ENCODE measurements at regions of chr1 and their contacts with region 1.

Region 1: GRCh38 chr1:198340139-198340538 is 183.3 kb downstream of the NEK7 start:
- DNase-seq: no peak
- ATAC-seq: no peak
- H3K4me3 ChIP-seq: no peak overlapping the region
- H3K4me3 Mint-ChIP-seq: no peak overlapping the region
- H3K27ac ChIP-seq: no peak overlapping the region
- H3K27ac Mint-ChIP-seq: no peak overlapping the region
- H3K4me1 ChIP-seq: no peaks in the 10 kb centered on the region
- H3K4me1 Mint-ChIP-seq: no peaks in the 10 kb centered on the region
- H3K27me3 ChIP-seq: no peaks in the 10 kb centered on the region
- H3K27me3 Mint-ChIP-seq: no peaks in the 10 kb centered on the region
- CTCF ChIP-seq: no peak

Region 2: GRCh38 chr1:198283222-198283621 is 56.9 kb before region 1 on chr1:
- CTCF ChIA-PET with region 1: no interaction called
- POLR2A ChIA-PET with region 1: no interaction called
- intact Hi-C with region 1: no loop called
- DNase-seq: no peak
- ATAC-seq: no peak
- H3K4me3 ChIP-seq: no peak overlapping the region
- H3K4me3 Mint-ChIP-seq: no peak overlapping the region
- H3K27ac ChIP-seq: no peak overlapping the region
- H3K27ac Mint-ChIP-seq: no peak overlapping the region
- H3K4me1 ChIP-seq: no peaks in the 10 kb centered on the region
- H3K4me1 Mint-ChIP-seq: peaks cover 12% of the 10 kb centered on the region
- H3K27me3 ChIP-seq: no peaks in the 10 kb centered on the region
- H3K27me3 Mint-ChIP-seq: no peaks in the 10 kb centered on the region
- CTCF ChIP-seq: no peak

Region 3: GRCh38 chr1:198435056-198435455 is 94.9 kb after region 1 on chr1:
- CTCF ChIA-PET with region 1: no interaction called
- POLR2A ChIA-PET with region 1: no interaction called
- intact Hi-C with region 1: loop called in 1 of 2 experiments (anchors 1 kb)
- DNase-seq: no peak
- ATAC-seq: no peak
- H3K4me3 ChIP-seq: no peak overlapping the region
- H3K4me3 Mint-ChIP-seq: no peak overlapping the region
- H3K27ac ChIP-seq: no peak overlapping the region
- H3K27ac Mint-ChIP-seq: no peak overlapping the region
- H3K4me1 ChIP-seq: no peaks in the 10 kb centered on the region
- H3K4me1 Mint-ChIP-seq: no peaks in the 10 kb centered on the region
- H3K27me3 ChIP-seq: no peaks in the 10 kb centered on the region
- H3K27me3 Mint-ChIP-seq: no peaks in the 10 kb centered on the region
- CTCF ChIP-seq: no peak

Measured in CD4-positive, alpha-beta T cell (primary cell).